ENCODE measurements at regions of chr12 and their contacts with region 1.

Region 1: GRCh38 chr12:123670882-123671728 is at the start of gene TCTN2:
- DNase-seq: peak; percentile 98
- ATAC-seq: peak; percentile 100
- H3K4me3 Mint-ChIP-seq: peak within 1 kb of the TSS; percentile 78
- H3K27ac Mint-ChIP-seq: peak within 1 kb of the TSS; percentile 25
- H3K4me1 Mint-ChIP-seq: peaks cover 15% of the 10 kb centered on the region
- H3K27me3 Mint-ChIP-seq: no peaks in the 10 kb centered on the region
- total RNA-seq, gene TCTN2: 4.4 to 4.5 TPM

Region 2: GRCh38 chr12:123601602-123602489 is 69.3 kb before region 1 on chr12 and contains the start of gene DDX55:
- CTCF ChIA-PET with region 1: no interaction called
- POLR2A ChIA-PET with region 1: no interaction called
- intact Hi-C with region 1: loop called in 1 of 2 experiments (anchors 2 kb)
- DNase-seq: peak; percentile 93
- ATAC-seq: peak; percentile 95
- H3K4me3 Mint-ChIP-seq: peak within 1 kb of the TSS; percentile 85
- H3K27ac Mint-ChIP-seq: peak within 1 kb of the TSS; percentile 92
- H3K4me1 Mint-ChIP-seq: peaks cover 36% of the 10 kb centered on the region
- H3K27me3 Mint-ChIP-seq: no peaks in the 10 kb centered on the region
- total RNA-seq, gene DDX55: 44.3 to 49.4 TPM

Region 3: GRCh38 chr12:123877968-123878367 is 206.9 kb after region 1 on chr12:
- CTCF ChIA-PET with region 1: no interaction called
- POLR2A ChIA-PET with region 1: no interaction called
- intact Hi-C with region 1: no loop called
- DNase-seq: no peak
- ATAC-seq: no peak
- H3K4me3 Mint-ChIP-seq: no peak overlapping the region
- H3K27ac Mint-ChIP-seq: no peak overlapping the region
- H3K4me1 Mint-ChIP-seq: no peaks in the 10 kb centered on the region
- H3K27me3 Mint-ChIP-seq: no peaks in the 10 kb centered on the region

Measured in activated CD4-positive, alpha-beta T cell treated with anti-CD3 and anti-CD28 coated beads for 36 hours (primary cell).